ENCODE measurements at regions of chrX and their contacts with region 1.

Region 1: DNA sequence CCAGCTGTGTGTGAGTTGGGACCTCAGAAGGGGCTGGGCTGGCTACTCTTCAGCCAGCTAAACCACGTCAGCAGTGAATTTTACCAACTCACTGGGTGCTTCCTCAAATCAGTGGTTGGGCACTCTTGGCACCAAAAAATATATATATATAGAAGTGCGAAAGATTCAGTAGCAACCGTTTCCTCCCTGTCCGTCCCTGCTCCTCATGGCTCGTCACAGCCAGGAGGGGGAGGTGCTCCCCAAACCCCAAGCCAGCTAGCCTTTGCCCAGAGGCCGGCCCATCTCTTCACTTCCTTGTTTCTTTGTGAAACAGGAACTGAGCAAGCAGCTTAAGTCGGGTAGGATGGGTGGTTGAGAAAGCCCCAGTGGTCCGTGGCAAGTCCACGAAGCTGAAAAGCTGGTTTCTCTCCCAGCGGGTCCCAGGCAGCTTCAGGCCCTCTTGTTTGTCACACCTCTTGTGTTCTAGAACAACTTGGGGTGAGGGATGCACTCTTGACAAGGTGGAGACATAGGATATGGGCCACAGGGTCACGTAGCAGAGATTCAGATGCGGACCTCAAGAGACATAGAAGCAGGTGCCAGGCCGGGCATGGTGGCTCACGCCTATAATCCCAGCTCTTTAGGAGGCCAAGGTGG is 6.8 kb upstream of the SASH3 start:
- DNase-seq: no peak
- H3K4me3 ChIP-seq: no peak overlapping the region
- H3K27ac ChIP-seq: no peak overlapping the region
- H3K4me1 ChIP-seq: peaks cover 0 to 2% (median 0%) of the 10 kb centered on the region in 4 experiments; a peak in 3 of 7 replicates
- H3K27me3 ChIP-seq: no peaks in the 10 kb centered on the region
- CTCF ChIP-seq: no peak
- EP300 ChIP-seq: no peak
- POLR2A ChIP-seq: no peak
- RAD21 ChIP-seq: no peak

Region 2: GRCh38 chrX:129724754-129725153 is 48.2 kb before region 1 on chrX:
- CTCF ChIA-PET with region 1: no interaction called
- POLR2A ChIA-PET with region 1: no interaction called
- DNase-seq: no peak
- H3K4me3 ChIP-seq: no peak overlapping the region
- H3K27ac ChIP-seq: no peak overlapping the region
- H3K4me1 ChIP-seq: peaks cover 0 to 2% (median 1%) of the 10 kb centered on the region in 4 experiments; a peak in 3 of 7 replicates
- H3K27me3 ChIP-seq: no peaks in the 10 kb centered on the region
- CTCF ChIP-seq: no peak
- EP300 ChIP-seq: no peak
- POLR2A ChIP-seq: no peak
- RAD21 ChIP-seq: no peak

Region 3: DNA sequence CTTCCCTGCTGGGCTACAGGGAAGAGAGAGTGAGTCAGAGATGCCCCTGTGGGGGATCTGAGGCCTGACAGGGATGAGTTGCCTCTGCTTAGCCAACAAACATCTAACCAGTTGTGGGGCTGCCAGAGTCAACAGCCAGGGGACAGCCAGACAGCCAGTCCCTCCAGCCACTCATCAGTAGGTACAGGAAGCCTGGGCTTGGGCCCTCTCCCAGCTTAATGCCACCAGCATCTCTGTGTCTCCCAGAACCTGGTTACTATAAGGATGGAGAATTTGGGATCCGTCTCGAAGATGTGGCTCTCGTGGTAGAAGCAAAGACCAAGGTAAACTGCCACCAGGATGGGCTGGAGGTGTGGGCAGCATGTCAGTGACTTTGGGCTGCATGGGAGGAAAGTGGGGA is 10.5 kb before region 1 on chrX:
- CTCF ChIA-PET with region 1: interaction called, 13 read pairs
- POLR2A ChIA-PET with region 1: no interaction called
- DNase-seq: no peak
- H3K4me3 ChIP-seq: no peak overlapping the region
- H3K27ac ChIP-seq: no peak overlapping the region
- H3K4me1 ChIP-seq: no peaks in the 10 kb centered on the region
- H3K27me3 ChIP-seq: no peaks in the 10 kb centered on the region
- CTCF ChIP-seq: no peak
- EP300 ChIP-seq: no peak
- POLR2A ChIP-seq: no peak
- RAD21 ChIP-seq: no peak